ENCODE measurements at regions of chr10 and their contacts with region 1.

Region 1: GRCh38 chr10:2978111-2978510 is 89.2 kb upstream of the PFKP start:
- DNase-seq: no peak
- H3K4me3 Mint-ChIP-seq: no peak overlapping the region
- H3K27ac Mint-ChIP-seq: no peak overlapping the region
- H3K4me1 Mint-ChIP-seq: no peaks in the 10 kb centered on the region
- H3K27me3 Mint-ChIP-seq: no peaks in the 10 kb centered on the region
- CTCF ChIP-seq: no peak

Region 2: DNA sequence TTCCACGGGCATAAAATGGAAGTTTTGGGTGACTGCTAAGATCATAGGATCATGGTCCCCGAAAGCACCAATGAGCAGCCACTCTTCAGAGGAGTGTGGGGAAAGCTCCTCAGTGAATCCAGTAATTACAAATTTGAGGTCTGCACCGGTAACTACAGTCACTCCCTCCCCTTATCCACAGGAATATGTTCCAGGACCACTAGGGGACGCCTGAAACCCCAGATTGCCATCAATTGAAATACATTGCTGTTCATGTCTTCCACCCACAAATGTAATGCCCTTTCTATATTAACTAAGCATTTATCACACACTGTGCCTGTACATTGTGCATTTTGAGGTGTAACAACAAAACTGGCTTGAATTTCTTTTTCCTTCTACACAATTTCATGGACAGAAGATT is 358.6 kb before region 1 on chr10:
- CTCF ChIA-PET with region 1: no interaction called
- intact Hi-C with region 1: loop called (anchors 1 kb)
- DNase-seq: peak; percentile 10
- H3K4me3 Mint-ChIP-seq: no peak overlapping the region
- H3K27ac Mint-ChIP-seq: no peak overlapping the region
- H3K4me1 Mint-ChIP-seq: no peaks in the 10 kb centered on the region
- H3K27me3 Mint-ChIP-seq: peaks cover 13% of the 10 kb centered on the region
- CTCF ChIP-seq: no peak

Region 3: DNA sequence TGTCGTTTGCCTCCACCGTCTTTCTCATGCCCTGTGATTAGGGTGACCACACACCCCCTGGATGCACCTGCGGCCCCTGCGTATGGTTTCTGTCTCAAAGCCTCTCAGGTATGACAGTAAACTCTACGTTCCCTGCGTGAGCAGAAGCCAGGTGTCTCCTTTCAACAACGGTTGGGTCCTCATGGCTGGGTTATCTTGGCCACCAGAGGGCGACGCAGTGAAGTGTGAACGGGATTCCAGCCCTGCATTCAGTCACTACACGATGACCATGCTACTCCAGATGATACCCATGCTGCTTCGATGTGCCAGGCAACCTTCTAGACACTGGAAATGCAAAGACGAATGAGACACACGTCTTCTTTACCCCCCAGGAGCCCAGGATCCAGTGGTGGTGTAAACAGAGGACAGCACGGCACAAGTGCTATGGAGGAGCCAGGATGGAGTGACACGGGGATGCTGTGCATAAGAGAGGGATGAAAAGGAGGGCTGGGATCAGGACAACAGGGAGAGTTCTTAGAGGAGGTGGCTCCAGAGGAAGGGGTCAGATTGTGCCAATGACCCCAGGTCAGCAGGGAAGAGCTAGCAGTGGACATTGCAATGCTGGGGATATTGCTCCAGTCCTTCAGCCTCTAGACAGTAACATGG is 138.9 kb before region 1 on chr10:
- CTCF ChIA-PET with region 1: no interaction called
- intact Hi-C with region 1: loop called (anchors 1 kb)
- DNase-seq: peak; percentile 52
- H3K4me3 Mint-ChIP-seq: no peak overlapping the region
- H3K27ac Mint-ChIP-seq: no peak overlapping the region
- H3K4me1 Mint-ChIP-seq: no peaks in the 10 kb centered on the region
- H3K27me3 Mint-ChIP-seq: peaks cover 73% of the 10 kb centered on the region
- CTCF ChIP-seq: peak; percentile 59

Region 4: GRCh38 chr10:2927958-2928840 is 49.9 kb before region 1 on chr10:
- CTCF ChIA-PET with region 1: interaction called, 4 read pairs
- intact Hi-C with region 1: loop called (anchors 5 kb)
- DNase-seq: peak; percentile 83
- H3K4me3 Mint-ChIP-seq: no peak overlapping the region
- H3K27ac Mint-ChIP-seq: no peak overlapping the region
- H3K4me1 Mint-ChIP-seq: peaks cover 19% of the 10 kb centered on the region
- H3K27me3 Mint-ChIP-seq: peaks cover 24% of the 10 kb centered on the region
- CTCF ChIP-seq: peak; percentile 82

Measured in Calu3 (cell line).